ENCODE measurements at regions of chr2 and their contacts with region 1.

Region 1: GRCh38 chr2:43937269-43937820 is 58.4 kb downstream of the LRPPRC start:
- DNase-seq: no peak
- CTCF ChIP-seq: no peak

Region 2: GRCh38 chr2:43887176-43887575 is 50.2 kb before region 1 on chr2:
- CTCF ChIA-PET with region 1: no interaction called
- POLR2A ChIA-PET with region 1: no interaction called
- DNase-seq: no peak
- CTCF ChIP-seq: no peak

Region 3: GRCh38 chr2:43950383-43951008 is 13.2 kb after region 1 on chr2:
- CTCF ChIA-PET with region 1: interaction called, 11 read pairs
- POLR2A ChIA-PET with region 1: no interaction called
- DNase-seq: peak; percentile 11
- CTCF ChIP-seq: peak; percentile 37

Region 4: GRCh38 chr2:44033947-44034346 is 96.6 kb after region 1 on chr2:
- CTCF ChIA-PET with region 1: no interaction called
- POLR2A ChIA-PET with region 1: no interaction called
- DNase-seq: no peak
- CTCF ChIP-seq: no peak

Region 5: DNA sequence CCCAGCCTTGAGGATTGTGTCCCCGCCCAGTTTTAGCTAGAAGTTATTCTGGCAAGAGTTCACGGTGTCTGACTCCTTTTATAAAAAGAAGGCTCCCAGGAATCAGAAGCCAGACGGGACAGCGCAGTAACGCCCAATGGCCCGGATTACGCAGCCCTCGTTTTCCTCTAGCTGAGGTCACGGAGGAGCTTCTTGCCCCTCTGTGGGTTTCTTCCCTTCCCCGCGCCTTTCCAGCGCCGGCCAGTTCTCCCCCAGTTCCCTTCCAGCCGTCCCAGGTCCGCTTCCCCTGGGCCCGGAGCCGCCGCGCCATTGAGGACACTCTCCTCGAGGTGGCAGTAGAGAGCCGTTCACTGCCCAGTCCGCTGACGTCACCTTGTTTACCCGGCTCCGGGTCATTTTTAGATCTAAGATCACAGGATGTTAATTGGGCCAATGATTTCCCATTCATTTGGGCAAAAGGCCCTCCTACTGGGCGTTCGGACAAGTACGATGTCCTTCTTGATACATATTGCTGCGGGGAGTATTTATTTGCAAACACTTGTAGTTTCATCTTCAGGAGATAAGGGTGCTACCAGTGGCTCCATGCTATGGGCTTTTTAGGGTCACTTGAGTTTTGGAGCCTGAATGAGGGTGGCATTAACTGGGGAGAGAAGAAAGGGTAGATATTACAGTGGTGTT is 149.8 kb after region 1 on chr2:
- CTCF ChIA-PET with region 1: no interaction called
- POLR2A ChIA-PET with region 1: no interaction called
- DNase-seq: peak; percentile 87
- CTCF ChIP-seq: peak; percentile 87